ENCODE measurements at regions of chr12 and their contacts with region 1.

Region 1: DNA sequence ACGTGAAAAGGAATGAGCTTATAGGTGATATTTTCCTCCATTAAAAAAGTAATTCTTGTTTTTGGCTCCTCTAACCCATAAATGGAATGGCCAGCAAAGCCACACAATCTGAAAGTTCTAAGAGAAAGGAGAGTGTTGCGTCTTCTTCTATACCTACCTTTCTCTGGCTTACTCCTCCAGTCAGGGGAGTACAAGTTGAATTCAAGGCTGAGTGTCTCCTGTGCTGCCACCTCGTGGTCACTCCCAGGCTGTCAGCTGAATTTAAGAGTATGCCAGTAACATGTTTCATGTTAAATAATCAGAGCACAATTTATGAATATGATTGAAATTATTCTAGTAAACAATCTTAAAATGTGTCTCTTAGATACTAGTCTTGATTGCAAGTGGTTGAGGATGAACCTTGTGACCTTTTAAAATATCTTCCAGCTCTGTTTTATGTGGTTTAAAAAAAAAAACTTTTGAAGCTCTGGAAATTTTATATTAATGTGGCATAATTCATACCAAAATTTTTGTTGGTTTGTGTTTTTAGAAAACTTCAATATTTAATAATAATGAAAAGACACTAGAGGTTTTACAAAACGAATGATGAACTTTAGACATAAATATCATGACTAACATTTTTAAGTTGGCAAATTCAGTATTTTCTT is 31.7 kb downstream of the PTHLH start:
- DNase-seq: no peak
- H3K4me3 ChIP-seq: no peak overlapping the region
- CTCF ChIP-seq: peak; percentile 80

Region 2: DNA sequence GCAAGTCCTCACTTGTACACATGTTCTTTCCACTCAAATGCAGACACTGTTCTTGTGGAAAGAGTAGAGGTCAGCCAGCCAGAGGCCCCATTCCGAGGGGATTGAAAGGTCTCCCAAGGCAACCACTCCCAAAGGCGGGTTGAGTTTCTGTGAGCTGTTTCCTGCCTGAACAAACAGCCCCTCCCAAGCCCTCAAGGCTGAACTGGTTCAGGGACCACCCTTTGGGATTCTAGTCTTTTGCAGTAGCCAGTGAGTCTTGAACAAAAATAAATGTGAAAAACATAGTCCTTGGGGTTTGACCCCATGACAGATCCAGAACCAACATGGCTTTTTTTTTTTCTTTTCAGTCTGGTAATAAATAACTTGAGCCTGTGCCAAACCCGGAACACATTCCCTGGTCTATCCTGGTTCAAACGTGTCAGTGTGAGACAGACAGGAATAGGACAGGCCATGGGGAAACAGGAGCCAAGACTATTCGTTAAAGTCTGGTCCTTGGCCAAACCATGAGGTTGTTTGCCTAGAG is 714.4 kb before region 1 on chr12:
- CTCF ChIA-PET with region 1: no interaction called
- POLR2A ChIA-PET with region 1: no interaction called
- DNase-seq: no peak
- H3K4me3 ChIP-seq: no peak overlapping the region
- CTCF ChIP-seq: no peak

Region 3: GRCh38 chr12:27434673-27435565 is 506.0 kb before region 1 on chr12:
- CTCF ChIA-PET with region 1: no interaction called
- POLR2A ChIA-PET with region 1: no interaction called
- DNase-seq: no peak
- H3K4me3 ChIP-seq: no peak overlapping the region
- CTCF ChIP-seq: peak; percentile 23

Region 4: DNA sequence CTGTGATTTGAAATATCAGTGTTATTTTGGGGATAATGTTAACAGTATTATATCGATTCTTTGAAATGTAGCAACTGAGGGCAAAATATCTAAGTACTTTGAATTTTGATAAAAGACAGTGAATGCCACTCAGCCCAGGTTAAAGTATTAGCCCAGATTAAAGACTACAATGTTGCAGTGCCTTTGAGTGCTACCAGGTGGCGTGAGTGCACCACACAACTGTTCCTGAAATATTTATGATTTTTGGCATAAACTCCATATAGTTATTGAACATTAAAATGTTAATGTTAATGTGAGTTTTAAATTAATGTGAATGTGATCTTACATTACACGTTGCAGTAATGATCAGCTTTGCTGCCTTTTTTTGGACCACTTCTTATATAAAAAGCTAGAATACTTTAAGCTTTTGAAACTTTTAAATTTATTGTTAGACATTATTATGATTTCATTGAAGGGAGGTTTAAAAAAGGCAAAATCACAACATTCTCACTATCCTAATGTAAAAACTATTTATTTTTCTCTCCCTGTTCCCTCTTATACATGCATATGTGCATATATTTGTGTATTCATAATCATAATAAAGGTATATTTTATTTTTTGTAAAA is 207.7 kb before region 1 on chr12:
- CTCF ChIA-PET with region 1: interaction called, 59 read pairs
- POLR2A ChIA-PET with region 1: no interaction called
- DNase-seq: no peak
- H3K4me3 ChIP-seq: no peak overlapping the region
- CTCF ChIP-seq: peak; percentile 79

Region 5: DNA sequence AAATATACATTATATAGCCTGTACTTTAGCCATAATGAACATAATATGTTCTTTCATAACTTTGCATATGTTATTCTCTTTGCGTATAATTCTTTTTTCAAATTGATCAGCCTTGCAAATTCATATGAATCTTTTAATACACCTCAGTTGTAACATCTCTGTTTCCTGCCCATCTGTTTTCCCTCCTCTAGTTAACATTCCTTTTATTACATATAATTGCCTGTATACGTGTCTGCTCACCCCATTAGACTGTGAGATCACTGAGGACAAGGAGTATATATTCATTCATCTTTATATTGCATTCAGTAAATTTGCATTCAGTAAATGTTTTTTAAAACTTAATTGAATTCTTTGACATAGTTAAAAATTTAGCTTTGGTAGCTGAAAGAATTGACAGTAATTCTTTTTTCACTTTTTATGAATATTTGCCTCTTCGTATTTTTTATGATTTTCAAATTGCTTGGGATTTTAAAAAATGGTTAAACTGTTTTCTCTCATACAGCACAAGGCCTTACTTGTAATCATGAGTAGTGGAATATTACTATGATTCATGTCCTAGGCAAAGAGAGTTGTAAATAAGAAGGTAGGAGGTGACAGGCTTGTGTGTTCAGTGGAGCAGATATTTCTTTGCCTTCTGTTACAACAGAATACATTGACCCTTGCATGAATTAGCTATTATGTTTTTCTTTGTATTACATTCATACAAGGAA is 193.6 kb before region 1 on chr12:
- CTCF ChIA-PET with region 1: interaction called, 29 read pairs
- POLR2A ChIA-PET with region 1: no interaction called
- DNase-seq: no peak
- H3K4me3 ChIP-seq: no peak overlapping the region
- CTCF ChIP-seq: no peak

Region 6: GRCh38 chr12:27924350-27925135 is 16.3 kb before region 1 on chr12:
- CTCF ChIA-PET with region 1: interaction called, 39 read pairs
- POLR2A ChIA-PET with region 1: no interaction called
- DNase-seq: no peak
- H3K4me3 ChIP-seq: no peak overlapping the region
- CTCF ChIP-seq: no peak

Region 7: GRCh38 chr12:27952510-27952909 is 11.6 kb after region 1 on chr12:
- CTCF ChIA-PET with region 1: interaction called, 38 read pairs
- POLR2A ChIA-PET with region 1: no interaction called
- DNase-seq: no peak
- H3K4me3 ChIP-seq: no peak overlapping the region
- CTCF ChIP-seq: no peak

Region 8: GRCh38 chr12:27969624-27970400 is 28.9 kb after region 1 on chr12:
- CTCF ChIA-PET with region 1: interaction called, 32 read pairs
- POLR2A ChIA-PET with region 1: no interaction called
- DNase-seq: no peak
- H3K4me3 ChIP-seq: peak overlapping the region; percentile 65
- CTCF ChIP-seq: peak; percentile 20